ENCODE measurements at regions of chr10 and their contacts with region 1.

Region 1: DNA sequence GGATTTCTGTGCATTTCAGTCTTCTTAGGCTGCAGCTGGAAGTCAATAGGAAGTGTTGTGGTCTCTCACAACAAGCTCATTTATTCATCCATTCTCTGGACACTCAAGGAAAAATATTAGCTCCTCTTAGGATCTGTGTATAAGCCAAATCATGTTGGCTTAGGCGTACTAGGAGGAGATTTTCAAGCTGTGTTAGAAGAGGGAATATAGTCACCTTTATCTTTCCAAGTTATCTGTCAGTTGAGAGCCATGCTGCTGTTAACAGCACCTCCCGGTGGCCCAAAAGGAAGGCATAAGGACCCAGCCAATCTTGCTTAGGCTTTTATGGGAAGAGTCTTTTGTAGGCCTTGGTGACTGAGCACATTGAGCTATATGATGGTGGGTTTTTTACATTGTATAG is 220.0 kb downstream of the LRMDA start:
- DNase-seq: peak; percentile 64
- ATAC-seq: no peak
- H3K4me3 ChIP-seq: no peak overlapping the region
- H3K27ac ChIP-seq: no peak overlapping the region
- H3K4me1 ChIP-seq: peaks cover 48% of the 10 kb centered on the region
- H3K27me3 ChIP-seq: peaks cover 9% of the 10 kb centered on the region; the same call in 1 of the 2 replicates
- CTCF ChIP-seq: peak; percentile 71

Region 2: GRCh38 chr10:75335983-75336382 is 315.4 kb before region 1 on chr10:
- CTCF ChIA-PET with region 1: no interaction called
- POLR2A ChIA-PET with region 1: no interaction called
- intact Hi-C with region 1: no loop called
- DNase-seq: no peak
- ATAC-seq: no peak
- H3K4me3 ChIP-seq: no peak overlapping the region
- H3K27ac ChIP-seq: no peak overlapping the region
- H3K4me1 ChIP-seq: no peaks in the 10 kb centered on the region
- H3K27me3 ChIP-seq: peaks cover 18% of the 10 kb centered on the region
- CTCF ChIP-seq: no peak

Region 3: DNA sequence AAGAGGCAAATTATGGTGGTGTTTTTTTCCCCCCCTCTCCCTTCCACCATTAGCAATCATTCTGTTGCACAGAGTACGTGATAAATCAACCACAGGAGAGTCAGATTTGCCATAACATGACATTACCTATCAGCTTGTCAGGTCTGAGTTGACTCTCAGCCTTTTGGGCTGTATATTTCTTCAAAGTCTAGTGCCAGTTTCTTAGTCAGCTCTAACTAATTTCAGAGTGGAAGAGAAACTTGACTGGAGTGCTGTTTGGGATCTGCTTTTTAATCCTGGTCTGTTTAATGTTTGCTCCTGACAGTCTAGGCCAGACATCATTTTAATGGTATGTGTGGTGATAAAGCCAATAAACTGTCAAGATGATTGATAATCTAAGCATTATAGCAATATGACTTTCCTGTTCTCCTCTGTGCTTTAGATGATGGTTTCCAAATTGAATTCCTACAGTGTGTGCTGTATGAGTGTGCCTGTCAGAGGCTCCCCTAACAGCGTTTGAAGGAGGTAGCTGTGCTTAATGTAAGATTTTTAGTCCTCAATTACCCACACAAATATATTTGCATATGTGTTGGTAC is 143.1 kb before region 1 on chr10:
- CTCF ChIA-PET with region 1: no interaction called
- POLR2A ChIA-PET with region 1: no interaction called
- intact Hi-C with region 1: loop called (anchors 5 kb)
- DNase-seq: peak; percentile 91
- ATAC-seq: peak; percentile 64
- H3K4me3 ChIP-seq: no peak overlapping the region
- H3K27ac ChIP-seq: peak overlapping the region; percentile 15
- H3K4me1 ChIP-seq: peaks cover 30% of the 10 kb centered on the region
- H3K27me3 ChIP-seq: peaks cover 19% of the 10 kb centered on the region; the same call in 1 of the 2 replicates
- CTCF ChIP-seq: no peak

Region 4: DNA sequence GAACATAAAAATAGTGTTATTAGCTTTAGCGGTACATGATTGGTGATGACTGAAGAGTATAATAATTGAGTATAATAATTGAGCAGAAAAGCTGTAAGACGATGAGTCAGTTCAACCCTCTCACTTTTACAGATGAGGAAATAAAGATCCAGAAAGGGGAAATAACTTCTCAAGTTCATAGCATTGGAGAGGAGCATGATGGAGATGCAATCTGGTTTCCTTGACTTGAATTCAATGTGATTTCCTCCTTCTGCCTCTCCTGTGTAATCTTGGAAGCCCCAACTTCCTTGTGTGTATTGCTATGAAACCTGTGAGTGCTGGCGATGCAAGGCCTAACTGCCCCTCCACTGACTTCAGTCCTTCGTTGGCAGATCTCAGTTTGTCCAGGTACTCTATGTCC is 45.1 kb after region 1 on chr10:
- CTCF ChIA-PET with region 1: no interaction called
- POLR2A ChIA-PET with region 1: no interaction called
- intact Hi-C with region 1: no loop called
- DNase-seq: no peak
- ATAC-seq: no peak
- H3K4me3 ChIP-seq: no peak overlapping the region
- H3K27ac ChIP-seq: no peak overlapping the region
- H3K4me1 ChIP-seq: no peaks in the 10 kb centered on the region
- H3K27me3 ChIP-seq: peaks cover 36% of the 10 kb centered on the region
- CTCF ChIP-seq: no peak

Region 5: DNA sequence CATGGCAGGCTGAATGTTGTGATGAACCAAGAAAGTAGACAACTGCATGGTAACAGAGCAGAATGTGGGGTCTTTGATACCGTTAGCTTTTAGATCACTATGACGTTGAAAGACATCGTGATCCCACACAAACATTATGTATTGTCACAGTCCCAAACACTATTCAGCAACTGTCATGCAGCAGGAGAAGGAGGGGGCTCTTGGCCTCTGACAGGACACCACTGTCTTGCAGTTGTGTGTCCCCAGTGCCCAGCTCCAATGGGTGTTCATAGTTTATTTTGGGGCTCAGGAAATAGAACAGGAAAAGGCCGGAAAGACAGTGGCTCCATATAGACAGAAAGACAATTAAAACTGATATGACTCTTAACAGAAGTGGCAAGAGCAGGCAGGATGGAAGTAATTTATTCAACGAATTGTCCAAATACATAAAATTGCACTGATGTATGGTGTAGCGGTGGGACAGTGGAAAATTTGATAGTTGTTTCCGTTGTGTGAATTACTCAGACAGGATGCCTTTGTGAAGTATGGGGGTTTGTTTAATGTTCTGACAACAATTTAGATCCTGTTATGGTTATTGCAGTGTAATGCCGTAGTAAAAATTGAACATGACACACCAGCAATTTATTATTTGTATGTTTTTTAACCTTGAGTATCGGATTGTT is 72.0 kb after region 1 on chr10:
- CTCF ChIA-PET with region 1: no interaction called
- POLR2A ChIA-PET with region 1: no interaction called
- intact Hi-C with region 1: loop called (anchors 1 kb)
- DNase-seq: peak; percentile 58
- ATAC-seq: peak; percentile 76
- H3K4me3 ChIP-seq: no peak overlapping the region
- H3K27ac ChIP-seq: peak overlapping the region; percentile 44
- H3K4me1 ChIP-seq: no peaks in the 10 kb centered on the region
- H3K27me3 ChIP-seq: peaks cover 69% of the 10 kb centered on the region
- CTCF ChIP-seq: no peak

Region 6: GRCh38 chr10:75772153-75772887 is 120.9 kb after region 1 on chr10:
- CTCF ChIA-PET with region 1: interaction called, 3 read pairs
- POLR2A ChIA-PET with region 1: no interaction called
- intact Hi-C with region 1: loop called (anchors 1 kb)
- DNase-seq: peak; percentile 68
- ATAC-seq: no peak
- H3K4me3 ChIP-seq: peak overlapping the region; percentile 52
- H3K27ac ChIP-seq: peak overlapping the region; percentile 76
- H3K4me1 ChIP-seq: peaks cover 48% of the 10 kb centered on the region
- H3K27me3 ChIP-seq: peaks cover 17% of the 10 kb centered on the region; the same call in 1 of the 2 replicates
- CTCF ChIP-seq: no peak